ENCODE measurements at regions of chr1 and their contacts with region 1.

Region 1: DNA sequence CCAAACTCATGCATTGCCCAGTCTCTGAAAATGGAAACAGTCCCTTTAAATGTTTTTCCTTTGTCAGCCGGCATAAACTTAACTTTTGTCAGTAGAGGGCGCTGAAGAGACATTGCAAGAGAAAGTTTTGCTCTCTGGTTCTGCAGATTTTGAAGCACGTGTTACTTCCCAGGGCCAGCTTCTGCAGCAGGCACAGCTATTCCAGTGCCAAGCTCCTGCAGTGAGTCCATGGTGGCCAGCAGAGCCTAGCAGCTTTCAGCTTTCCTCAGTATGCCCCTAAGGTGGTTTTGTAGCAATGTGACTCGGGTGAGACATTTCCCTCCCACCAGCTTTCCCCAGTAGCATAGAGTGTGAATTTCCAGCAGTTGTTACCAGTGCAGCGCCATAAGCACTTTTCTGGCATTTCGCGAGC is 2.6 kb upstream of the IFI44L start:
- DNase-seq: peak; percentile 63
- H3K4me3 Mint-ChIP-seq: no peak overlapping the region
- H3K27ac Mint-ChIP-seq: peak overlapping the region; percentile 6
- H3K4me1 Mint-ChIP-seq: peaks cover 35% of the 10 kb centered on the region
- H3K27me3 Mint-ChIP-seq: peaks cover 18% of the 10 kb centered on the region

Region 2: DNA sequence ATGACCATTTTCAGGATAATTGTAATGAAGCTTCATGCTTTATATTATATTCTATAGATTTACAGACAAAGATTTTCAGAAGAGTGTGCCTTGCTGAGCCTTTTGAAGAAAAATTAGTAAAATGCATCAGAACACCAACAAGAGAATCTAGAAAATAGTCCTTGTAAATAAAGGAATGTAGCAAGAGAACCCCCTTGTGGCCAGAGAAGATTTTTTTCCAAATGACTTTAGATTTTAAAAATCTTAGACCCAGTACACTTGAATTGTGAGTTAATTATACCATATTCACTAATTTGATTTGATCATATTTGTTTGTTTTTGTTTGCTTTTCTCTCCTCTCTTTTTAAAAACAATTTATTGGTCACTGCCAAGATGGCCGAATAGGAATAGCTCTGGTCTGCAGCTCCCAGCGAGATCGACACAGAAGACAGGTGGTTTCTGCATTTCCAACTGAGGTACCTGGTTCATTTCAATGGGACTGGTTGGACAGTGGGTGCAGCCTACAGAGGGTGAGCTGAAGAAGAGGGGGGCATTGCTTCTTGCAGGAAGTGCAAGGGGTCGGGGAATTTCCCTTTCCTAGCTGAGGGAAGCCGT is 10.2 kb before region 1 on chr1:
- CTCF ChIA-PET with region 1: interaction called, 11 read pairs
- POLR2A ChIA-PET with region 1: no interaction called
- DNase-seq: no peak
- H3K4me3 Mint-ChIP-seq: no peak overlapping the region
- H3K27ac Mint-ChIP-seq: no peak overlapping the region
- H3K4me1 Mint-ChIP-seq: no peaks in the 10 kb centered on the region
- H3K27me3 Mint-ChIP-seq: peaks cover 41% of the 10 kb centered on the region

Region 3: DNA sequence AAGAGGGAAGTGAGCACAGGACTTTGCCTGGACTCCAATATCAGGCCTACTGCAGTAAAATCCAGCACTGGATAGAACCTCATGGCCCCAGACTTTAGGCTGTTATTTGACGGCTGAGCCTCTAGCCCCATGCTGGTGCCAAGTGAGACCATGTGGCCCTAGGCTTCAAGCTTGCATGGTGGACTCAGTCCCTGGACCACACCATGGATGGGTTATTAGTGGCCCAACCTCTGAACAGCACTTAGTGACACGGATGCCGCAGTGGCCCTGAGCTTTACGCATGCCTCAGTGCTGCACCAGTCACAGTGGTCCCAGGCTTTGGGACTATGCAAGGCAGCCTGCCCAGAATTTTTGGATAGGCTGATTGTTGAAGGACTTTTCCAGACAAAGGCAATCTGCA is 15.6 kb after region 1 on chr1:
- CTCF ChIA-PET with region 1: interaction called, 17 read pairs
- POLR2A ChIA-PET with region 1: interaction called, 10 read pairs
- DNase-seq: no peak
- H3K4me3 Mint-ChIP-seq: no peak overlapping the region
- H3K27ac Mint-ChIP-seq: no peak overlapping the region
- H3K4me1 Mint-ChIP-seq: peaks cover 45% of the 10 kb centered on the region
- H3K27me3 Mint-ChIP-seq: no peaks in the 10 kb centered on the region

Region 4: DNA sequence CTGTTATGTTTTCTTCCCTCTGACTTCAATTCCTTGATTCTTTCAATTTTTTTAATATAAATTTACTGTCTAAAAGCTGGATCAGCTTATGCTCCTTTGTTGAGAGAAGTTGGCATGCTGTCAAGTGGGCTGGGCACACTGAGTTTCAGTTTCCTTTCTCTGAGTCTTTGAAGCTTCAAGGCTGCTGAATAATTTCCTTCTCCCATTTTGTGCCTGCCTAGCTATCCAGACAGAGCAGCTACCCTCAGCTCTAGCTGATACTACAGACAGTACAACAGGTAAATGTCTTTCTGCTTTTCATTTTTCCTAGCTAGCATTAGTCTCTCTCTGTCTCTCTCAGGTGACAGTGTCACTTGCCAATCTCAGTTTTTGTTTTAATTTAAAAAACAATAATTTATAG is 32.0 kb after region 1 on chr1 and contains the start of gene IFI44:
- CTCF ChIA-PET with region 1: interaction called, 11 read pairs
- POLR2A ChIA-PET with region 1: interaction called, 84 read pairs
- DNase-seq: peak; percentile 75
- H3K4me3 Mint-ChIP-seq: peak within 1 kb of the TSS; percentile 98
- H3K27ac Mint-ChIP-seq: peak within 1 kb of the TSS; percentile 90
- H3K4me1 Mint-ChIP-seq: peaks cover 59% of the 10 kb centered on the region
- H3K27me3 Mint-ChIP-seq: no peaks in the 10 kb centered on the region
- total RNA-seq, gene IFI44: 320 to 338 TPM

Region 5: GRCh38 chr1:78676347-78676982 is 58.8 kb after region 1 on chr1:
- CTCF ChIA-PET with region 1: interaction called, 21 read pairs
- POLR2A ChIA-PET with region 1: interaction called, 11 read pairs
- DNase-seq: peak; percentile 48
- H3K4me3 Mint-ChIP-seq: no peak overlapping the region
- H3K27ac Mint-ChIP-seq: no peak overlapping the region
- H3K4me1 Mint-ChIP-seq: peaks cover 23% of the 10 kb centered on the region
- H3K27me3 Mint-ChIP-seq: peaks cover 2% of the 10 kb centered on the region